Heart right ventricle (tissue), 16 donors: ENCODE measurements at regions of chr17 and their contacts with region 1.

Region 1: GRCh38 chr17:47162013-47162622 is 27.0 kb downstream of the CDC27 start:
- DNase-seq: no peak
- ATAC-seq: no peak
- H3K4me3 ChIP-seq: no peak overlapping the region
- H3K27ac ChIP-seq: peak overlapping the region in 3 of 10 donors; percentile 13 to 45 (median 29)
- H3K4me1 ChIP-seq: peaks cover 0 to 42% (median 16%) of the 10 kb centered on the region in 9 donors
- H3K27me3 ChIP-seq: no peaks in the 10 kb centered on the region
- CTCF ChIP-seq: no peak

Region 2: GRCh38 chr17:47315451-47316266 is 153.5 kb after region 1 on chr17:
- intact Hi-C with region 1: loop called in 1 of 10 experiments (anchors 10 kb)
- DNase-seq: peak in 1 of 2 donors; percentile 33
- ATAC-seq: peak in 7 of 8 donors; percentile 58 to 88 (median 83)
- H3K4me3 ChIP-seq: no peak overlapping the region
- H3K27ac ChIP-seq: peak overlapping the region in 4 of 10 donors; percentile 5 to 49 (median 12)
- H3K4me1 ChIP-seq: peaks cover 0 to 18% (median 6%) of the 10 kb centered on the region in 9 donors
- H3K27me3 ChIP-seq: no peaks in the 10 kb centered on the region
- CTCF ChIP-seq: peak; percentile 55 to 93 (median 84)